CD4-positive, alpha-beta T cell (primary cell): ENCODE measurements at regions of chr2 and their contacts with region 1.

Region 1: DNA sequence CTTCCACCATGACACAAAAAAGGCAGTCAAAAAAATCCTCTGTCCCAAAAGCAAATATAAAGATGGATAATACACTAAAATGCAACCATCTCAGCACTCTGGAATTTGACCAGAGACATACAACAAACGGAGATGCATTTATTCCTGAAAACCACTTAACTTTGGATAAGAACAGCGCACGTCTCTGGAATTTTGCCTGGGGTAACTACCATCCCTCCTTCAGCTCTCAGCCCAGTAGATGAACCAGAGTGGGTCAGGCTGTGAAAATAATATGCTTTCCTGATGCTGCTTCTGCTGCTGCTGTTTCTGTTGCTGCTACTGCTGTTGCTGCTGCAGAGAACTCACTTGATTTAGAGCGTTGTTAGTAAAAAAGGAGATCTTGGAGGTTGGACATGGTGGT is 133.8 kb upstream of the ACVR2A start:
- DNase-seq: no peak
- ATAC-seq: no peak
- H3K4me3 ChIP-seq: no peak overlapping the region
- H3K4me3 Mint-ChIP-seq: no peak overlapping the region
- H3K27ac ChIP-seq: no peak overlapping the region
- H3K27ac Mint-ChIP-seq: no peak overlapping the region
- H3K4me1 ChIP-seq: no peaks in the 10 kb centered on the region
- H3K4me1 Mint-ChIP-seq: no peaks in the 10 kb centered on the region
- H3K27me3 ChIP-seq: no peaks in the 10 kb centered on the region
- H3K27me3 Mint-ChIP-seq: no peaks in the 10 kb centered on the region
- CTCF ChIP-seq: no peak

Region 2: DNA sequence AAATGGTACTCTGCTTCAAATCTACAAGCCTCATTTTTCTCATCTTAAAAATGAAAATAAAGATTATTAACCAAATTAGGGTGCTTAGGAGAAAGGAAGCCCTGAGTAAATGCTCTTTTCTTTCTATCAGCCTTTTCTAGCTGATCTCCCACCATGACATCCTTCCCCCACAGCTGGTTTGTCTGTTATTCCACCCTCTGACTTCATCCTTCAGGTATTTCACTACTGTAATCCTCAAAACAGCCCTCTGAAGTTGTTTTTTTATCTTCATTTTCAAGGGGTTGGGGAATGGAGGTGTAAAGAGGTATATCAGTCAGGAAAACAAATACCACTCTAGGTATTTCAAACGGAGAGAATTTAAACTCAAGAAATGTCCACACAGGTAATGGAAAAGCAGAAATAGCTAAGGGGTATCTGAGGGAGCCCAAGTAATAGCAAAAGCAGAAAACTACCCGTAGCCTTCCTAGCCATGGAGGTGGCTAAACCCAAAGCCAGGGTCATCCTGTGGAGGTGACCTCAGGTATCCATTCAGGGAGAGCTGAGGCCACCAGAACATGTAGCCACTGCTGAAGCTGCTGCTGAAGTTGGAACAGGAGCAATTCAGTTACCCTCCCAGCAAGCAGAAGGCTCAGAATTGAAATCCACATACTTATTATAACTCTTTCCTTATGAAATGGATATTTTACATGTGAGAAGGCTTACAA is 857.1 kb before region 1 on chr2:
- CTCF ChIA-PET with region 1: no interaction called
- POLR2A ChIA-PET with region 1: no interaction called
- intact Hi-C with region 1: loop called in 1 of 2 experiments (anchors 5 kb)
- DNase-seq: no peak
- ATAC-seq: no peak
- H3K4me3 ChIP-seq: no peak overlapping the region
- H3K4me3 Mint-ChIP-seq: no peak overlapping the region
- H3K27ac ChIP-seq: no peak overlapping the region
- H3K27ac Mint-ChIP-seq: no peak overlapping the region
- H3K4me1 ChIP-seq: no peaks in the 10 kb centered on the region
- H3K4me1 Mint-ChIP-seq: no peaks in the 10 kb centered on the region
- H3K27me3 ChIP-seq: no peaks in the 10 kb centered on the region
- H3K27me3 Mint-ChIP-seq: no peaks in the 10 kb centered on the region
- CTCF ChIP-seq: no peak

Region 3: DNA sequence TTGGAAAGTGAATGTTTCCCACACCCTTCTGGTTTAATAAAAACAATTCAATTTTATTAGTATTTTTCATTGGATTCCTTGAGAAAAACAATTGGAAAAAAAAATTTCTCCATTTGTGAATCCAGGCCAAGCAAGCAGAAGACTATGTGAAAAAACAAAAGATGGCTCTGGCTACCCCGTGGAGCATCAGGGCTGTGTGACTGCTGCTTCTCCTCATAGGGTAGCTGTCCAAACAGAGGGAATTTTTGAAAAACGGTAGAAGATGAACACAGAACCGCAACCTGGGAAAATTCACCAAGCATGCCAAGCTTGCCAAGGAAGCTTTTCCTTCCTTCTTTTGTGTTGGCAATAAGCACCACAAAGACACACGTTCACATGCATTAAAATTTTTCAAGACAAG is 62.4 kb after region 1 on chr2:
- CTCF ChIA-PET with region 1: no interaction called
- POLR2A ChIA-PET with region 1: no interaction called
- intact Hi-C with region 1: no loop called
- DNase-seq: no peak
- ATAC-seq: no peak
- H3K4me3 ChIP-seq: no peak overlapping the region
- H3K4me3 Mint-ChIP-seq: no peak overlapping the region
- H3K27ac ChIP-seq: no peak overlapping the region
- H3K27ac Mint-ChIP-seq: no peak overlapping the region
- H3K4me1 ChIP-seq: no peaks in the 10 kb centered on the region
- H3K4me1 Mint-ChIP-seq: no peaks in the 10 kb centered on the region
- H3K27me3 ChIP-seq: no peaks in the 10 kb centered on the region
- H3K27me3 Mint-ChIP-seq: no peaks in the 10 kb centered on the region
- CTCF ChIP-seq: no peak